Caco-2 (cell line): ENCODE measurements at regions of chr3 and their contacts with region 1.

Region 1: GRCh38 chr3:196412704-196413103 is 19.5 kb downstream of the UBXN7 start:
- DNase-seq: no peak
- H3K4me3 ChIP-seq: no peak overlapping the region
- H3K4me3 Mint-ChIP-seq: no peak overlapping the region
- H3K27ac Mint-ChIP-seq: no peak overlapping the region
- H3K4me1 ChIP-seq: no peaks in the 10 kb centered on the region
- H3K4me1 Mint-ChIP-seq: no peaks in the 10 kb centered on the region
- H3K27me3 ChIP-seq: no peaks in the 10 kb centered on the region
- H3K27me3 Mint-ChIP-seq: no peaks in the 10 kb centered on the region
- CTCF ChIP-seq: no peak

Region 2: DNA sequence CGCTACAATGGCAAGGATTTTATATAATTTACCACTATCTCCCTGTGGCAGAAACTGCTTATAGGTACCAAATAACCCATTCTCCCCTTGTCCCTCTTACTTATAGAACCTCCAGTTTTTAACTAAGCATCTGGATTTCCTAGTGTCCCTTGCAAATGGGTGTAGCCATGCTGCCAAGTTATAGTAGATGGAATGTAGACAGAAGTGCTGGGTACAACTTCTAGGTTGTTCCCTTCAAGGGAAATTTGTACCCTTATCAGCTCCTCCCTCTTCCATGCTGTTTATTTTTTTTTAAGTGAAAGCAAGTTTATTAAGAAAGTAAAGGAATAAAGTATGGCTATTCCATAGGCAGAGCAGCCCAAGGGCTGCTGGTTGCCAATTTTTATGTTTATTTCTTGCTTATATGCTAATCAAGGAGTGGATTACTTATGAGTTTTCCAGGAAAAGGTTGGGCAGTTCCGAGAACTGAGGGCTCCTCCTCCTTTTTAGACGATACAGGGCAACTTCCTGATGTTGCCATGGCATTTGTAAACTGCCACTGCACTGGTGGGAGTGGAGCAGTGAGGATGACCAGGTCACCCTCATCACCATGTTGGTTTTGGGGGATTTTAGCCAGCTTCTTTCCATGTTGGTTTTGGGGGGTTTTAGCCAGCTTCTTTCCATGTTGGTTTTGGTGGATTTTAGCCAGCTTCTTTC is 34.4 kb before region 1 on chr3:
- CTCF ChIA-PET with region 1: no interaction called
- POLR2A ChIA-PET with region 1: no interaction called
- intact Hi-C with region 1: no loop called
- DNase-seq: no peak
- H3K4me3 ChIP-seq: no peak overlapping the region
- H3K4me3 Mint-ChIP-seq: no peak overlapping the region
- H3K27ac Mint-ChIP-seq: no peak overlapping the region
- H3K4me1 ChIP-seq: no peaks in the 10 kb centered on the region
- H3K4me1 Mint-ChIP-seq: no peaks in the 10 kb centered on the region
- H3K27me3 ChIP-seq: no peaks in the 10 kb centered on the region
- H3K27me3 Mint-ChIP-seq: no peaks in the 10 kb centered on the region
- CTCF ChIP-seq: no peak

Region 3: DNA sequence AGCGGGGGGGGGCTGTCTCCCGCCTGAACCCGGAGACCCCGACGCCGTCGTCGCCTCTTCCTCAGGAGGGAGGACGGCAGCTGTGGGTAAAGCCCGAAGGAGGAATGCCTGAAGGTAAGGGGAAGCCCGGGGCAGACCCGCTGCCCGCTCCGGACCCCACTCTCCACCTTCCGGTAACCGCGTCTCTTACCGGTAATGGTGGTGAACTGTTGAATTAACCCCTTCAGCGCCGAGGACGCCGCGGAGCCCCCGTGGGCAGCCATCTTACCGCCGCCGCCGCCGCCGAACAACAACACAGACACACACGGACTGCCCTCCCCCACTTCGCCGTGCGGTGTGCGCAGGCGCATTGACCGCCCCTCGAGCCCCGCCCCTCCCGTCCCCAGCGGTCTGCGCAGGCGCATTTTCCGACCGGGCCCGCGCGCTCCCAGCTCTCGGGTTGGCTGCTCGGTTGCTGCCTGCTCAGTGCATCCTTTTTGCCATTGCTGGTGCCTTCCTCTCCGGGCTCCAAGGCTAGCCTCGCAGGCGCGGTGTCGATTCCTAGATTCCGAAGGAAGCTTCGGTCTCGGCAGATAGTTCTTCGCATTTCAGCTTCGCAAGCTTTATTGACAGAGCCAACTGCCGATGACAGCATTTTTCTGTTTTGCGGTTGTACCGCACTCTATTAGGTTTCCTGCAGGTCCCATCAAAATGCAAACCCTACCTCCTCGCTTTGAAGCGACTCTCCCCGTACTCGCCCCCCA is 19.6 kb after region 1 on chr3 and contains the start of gene UBXN7:
- CTCF ChIA-PET with region 1: no interaction called
- POLR2A ChIA-PET with region 1: interaction called, 16 read pairs
- intact Hi-C with region 1: no loop called
- DNase-seq: peak; percentile 92 to 95
- H3K4me3 ChIP-seq: peak within 1 kb of the TSS; percentile 88
- H3K4me3 Mint-ChIP-seq: peak within 1 kb of the TSS; percentile 83
- H3K27ac Mint-ChIP-seq: peak within 1 kb of the TSS; percentile 93
- H3K4me1 ChIP-seq: 0 out of 2 replicates have a peak, but pooled peaks cover 6% of the 10 kb centered on the region
- H3K4me1 Mint-ChIP-seq: peaks cover 7% of the 10 kb centered on the region
- H3K27me3 ChIP-seq: no peaks in the 10 kb centered on the region
- H3K27me3 Mint-ChIP-seq: no peaks in the 10 kb centered on the region
- CTCF ChIP-seq: no peak
- total RNA-seq, gene UBXN7: 59.9 and 62.7 TPM in 2 replicates